PC-9 (cell line): ENCODE measurements at regions of chr15 and their contacts with region 1.

Region 1: DNA sequence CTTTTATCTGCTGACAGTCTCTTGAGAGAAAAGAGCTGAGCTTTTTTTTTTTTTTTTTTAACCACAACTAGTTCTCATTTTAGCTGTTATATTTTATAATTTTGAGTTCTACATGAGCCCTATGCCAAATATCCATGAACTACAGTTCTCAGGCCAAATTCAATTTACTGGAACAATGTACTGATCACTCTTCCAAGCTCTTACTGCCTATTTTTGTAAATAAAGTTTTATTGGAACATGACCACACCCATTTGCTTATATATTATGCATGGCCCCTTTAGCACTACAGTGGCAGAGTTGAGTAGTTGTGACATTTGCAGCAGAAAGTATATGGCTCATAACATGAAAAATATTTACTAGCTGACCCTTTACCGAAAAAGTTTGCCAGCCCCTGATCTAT is 129.2 kb upstream of the SKOR1 start:
- DNase-seq: no peak
- H3K4me3 ChIP-seq: no peak overlapping the region
- H3K27ac ChIP-seq: no peak overlapping the region
- H3K4me1 ChIP-seq: no peaks in the 10 kb centered on the region
- H3K27me3 ChIP-seq: no peaks in the 10 kb centered on the region
- CTCF ChIP-seq: no peak

Region 2: GRCh38 chr15:67652586-67652985 is 43.5 kb before region 1 on chr15:
- CTCF ChIA-PET with region 1: no interaction called
- POLR2A ChIA-PET with region 1: interaction called, 16 read pairs
- intact Hi-C with region 1: no loop called
- DNase-seq: no peak
- H3K4me3 ChIP-seq: no peak overlapping the region
- H3K27ac ChIP-seq: no peak overlapping the region
- H3K4me1 ChIP-seq: no peaks in the 10 kb centered on the region
- H3K27me3 ChIP-seq: no peaks in the 10 kb centered on the region
- CTCF ChIP-seq: no peak

Region 3: DNA sequence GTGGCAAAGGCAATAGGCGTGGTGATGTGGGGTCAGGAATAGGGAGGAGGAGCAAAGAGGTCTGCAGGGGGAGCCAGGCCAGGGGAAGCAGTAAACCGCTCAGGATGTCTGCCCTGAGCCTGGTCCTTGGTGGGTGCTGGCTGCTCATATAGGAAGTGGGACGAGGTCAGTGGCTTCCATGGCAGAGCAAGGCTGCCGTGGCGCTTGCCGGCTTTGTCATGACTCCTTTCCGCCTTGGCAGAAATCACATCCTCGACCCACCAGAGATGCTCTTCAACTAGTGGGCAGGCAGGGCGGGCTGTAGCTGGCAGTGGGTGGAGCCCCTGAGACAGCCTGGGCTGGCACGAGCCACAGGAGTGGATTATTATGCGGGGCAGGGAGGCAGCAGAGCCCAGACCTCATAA is 116.2 kb after region 1 on chr15:
- CTCF ChIA-PET with region 1: no interaction called
- POLR2A ChIA-PET with region 1: no interaction called
- intact Hi-C with region 1: no loop called
- DNase-seq: no peak
- H3K4me3 ChIP-seq: no peak overlapping the region
- H3K27ac ChIP-seq: no peak overlapping the region
- H3K4me1 ChIP-seq: no peaks in the 10 kb centered on the region
- H3K27me3 ChIP-seq: no peaks in the 10 kb centered on the region
- CTCF ChIP-seq: no peak